ENCODE measurements at regions of chr5 and their contacts with region 1.

Region 1: GRCh38 chr5:177554474-177555111 is at the start of gene FAM193B:
- DNase-seq: peak; percentile 98
- H3K4me3 ChIP-seq: peak within 1 kb of the TSS; percentile 97 to 99 (median 98)
- H3K27ac ChIP-seq: peak within 1 kb of the TSS; percentile 86 to 90 (median 88)
- H3K4me1 ChIP-seq: peaks cover 23 to 48% (median 39%) of the 10 kb centered on the region in 4 donors
- H3K27me3 ChIP-seq: no peaks in the 10 kb centered on the region
- CTCF ChIP-seq: peak in 1 of 3 experiments; percentile 46
- EP300 ChIP-seq: no peak
- POLR2A ChIP-seq: no peak
- total RNA-seq, gene FAM193B: 24.4 to 65.6 (median 50.7) TPM

Region 2: GRCh38 chr5:177468696-177469628 is 85.6 kb before region 1 on chr5:
- intact Hi-C with region 1: no loop called
- DNase-seq: no peak
- H3K4me3 ChIP-seq: no peak overlapping the region
- H3K27ac ChIP-seq: peak overlapping the region; percentile 89 to 96 (median 94)
- H3K4me1 ChIP-seq: peaks cover 46 to 58% (median 54%) of the 10 kb centered on the region in 4 donors
- H3K27me3 ChIP-seq: no peaks in the 10 kb centered on the region
- CTCF ChIP-seq: no peak
- EP300 ChIP-seq: no peak
- POLR2A ChIP-seq: no peak

Region 3: GRCh38 chr5:177516604-177517568 is 37.7 kb before region 1 on chr5 and contains the start of gene DDX41:
- intact Hi-C with region 1: loop called (anchors 5 kb)
- DNase-seq: peak; percentile 99
- H3K4me3 ChIP-seq: peak within 1 kb of the TSS; percentile 79 to 98 (median 94)
- H3K27ac ChIP-seq: peak within 1 kb of the TSS; percentile 85 to 91 (median 90)
- H3K4me1 ChIP-seq: peaks cover 17 to 49% (median 32%) of the 10 kb centered on the region in 4 donors
- H3K27me3 ChIP-seq: no peaks in the 10 kb centered on the region
- CTCF ChIP-seq: peak; percentile 4 to 10 (median 8)
- EP300 ChIP-seq: no peak
- POLR2A ChIP-seq: no peak
- total RNA-seq, gene DDX41: 58.1 to 92.1 (median 66.0) TPM

Region 4: DNA sequence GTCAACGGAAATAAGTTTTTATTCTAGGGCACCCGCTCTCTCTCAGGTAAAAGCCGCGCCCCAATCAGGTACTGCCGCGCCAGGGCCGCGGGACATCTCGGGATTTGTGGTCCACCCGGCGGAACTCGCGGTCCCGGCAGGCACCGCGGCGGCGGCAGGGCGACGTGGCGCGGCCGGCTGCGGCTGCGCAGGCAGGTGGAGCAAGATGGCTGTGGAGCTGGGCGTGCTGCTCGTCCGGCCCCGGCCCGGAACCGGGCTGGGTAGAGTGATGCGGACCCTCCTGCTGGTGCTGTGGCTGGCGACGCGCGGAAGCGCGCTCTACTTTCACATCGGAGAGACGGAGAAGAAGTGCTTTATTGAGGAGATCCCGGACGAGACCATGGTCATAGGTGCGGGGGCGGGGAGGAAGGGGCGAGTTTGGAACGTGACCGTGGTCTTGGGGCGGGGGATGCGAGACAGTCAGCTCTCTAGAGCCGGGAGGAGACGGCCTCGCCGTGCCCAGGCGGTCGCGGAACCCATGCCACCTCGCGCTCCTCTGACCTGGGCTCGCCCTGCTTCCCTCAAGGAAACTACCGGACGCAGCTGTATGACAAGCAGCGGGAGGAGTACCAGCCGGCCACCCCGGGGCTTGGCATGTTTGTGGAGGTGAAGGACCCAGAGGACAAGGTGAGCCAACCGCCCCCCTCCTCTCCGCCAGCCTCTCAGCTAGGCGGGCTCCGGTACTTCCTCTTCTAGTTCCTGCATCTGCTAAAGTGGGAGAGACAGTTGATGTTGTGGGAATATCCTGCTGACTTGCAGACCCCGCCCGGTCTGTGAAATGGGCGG is 37.6 kb after region 1 on chr5 and contains the start of gene TMED9:
- intact Hi-C with region 1: loop called (anchors 5 kb)
- DNase-seq: no peak
- H3K4me3 ChIP-seq: peak within 1 kb of the TSS; percentile 81 to 100 (median 86)
- H3K27ac ChIP-seq: peak within 1 kb of the TSS; percentile 71 to 82 (median 73)
- H3K4me1 ChIP-seq: peaks cover 12 to 27% (median 21%) of the 10 kb centered on the region in 4 donors
- H3K27me3 ChIP-seq: peaks cover 0 to 11% (median 0%) of the 10 kb centered on the region in 4 donors
- CTCF ChIP-seq: peak in 2 of 3 experiments; percentile 32 to 33
- EP300 ChIP-seq: no peak
- POLR2A ChIP-seq: peak; percentile 77
- total RNA-seq, gene TMED9: 47.3 to 75.7 (median 62.3) TPM